HEK293 (cell line): ENCODE measurements at regions of chr15 and their contacts with region 1.

Region 1: DNA sequence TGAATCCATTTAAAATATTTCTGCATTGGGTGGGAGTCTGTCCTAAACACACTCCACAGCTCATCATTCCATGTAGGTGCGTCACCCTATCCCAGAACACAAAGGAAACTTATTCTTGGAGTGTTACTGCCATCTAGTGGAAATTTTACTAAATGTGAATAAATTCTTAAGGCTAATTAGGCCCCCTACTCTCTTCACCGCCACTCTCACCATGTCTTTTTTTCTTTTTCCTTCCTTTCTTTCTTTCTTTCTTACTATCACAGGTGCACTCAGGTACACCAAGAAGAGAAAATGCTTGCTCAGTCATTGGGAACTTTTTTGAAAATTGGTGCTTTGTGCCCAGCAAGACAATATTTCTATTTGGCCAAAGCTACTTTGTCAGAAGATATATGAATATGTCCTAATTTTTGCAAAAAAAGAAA is 26.4 kb upstream of the ATP8B4 start:
- H3K4me3 ChIP-seq: no peak overlapping the region
- H3K27ac ChIP-seq: no peak overlapping the region
- H3K4me1 ChIP-seq: no peaks in the 10 kb centered on the region
- CTCF ChIP-seq: 0 out of 2 replicates have a peak, but pooled peaks have one; percentile 39

Region 2: GRCh38 chr15:49235446-49236124 is 909.9 kb before region 1 on chr15:
- CTCF ChIA-PET with region 1: interaction called, 12 read pairs
- POLR2A ChIA-PET with region 1: no interaction called
- H3K4me3 ChIP-seq: no peak overlapping the region
- H3K27ac ChIP-seq: no peak overlapping the region
- H3K4me1 ChIP-seq: peaks cover 3% of the 10 kb centered on the region; the same call in 1 of the 2 replicates
- CTCF ChIP-seq: peak; percentile 38; the same call in 1 of the 2 replicates

Region 3: GRCh38 chr15:50017522-50017921 is 127.9 kb before region 1 on chr15:
- CTCF ChIA-PET with region 1: no interaction called
- POLR2A ChIA-PET with region 1: no interaction called
- H3K4me3 ChIP-seq: no peak overlapping the region
- H3K27ac ChIP-seq: no peak overlapping the region
- H3K4me1 ChIP-seq: no peaks in the 10 kb centered on the region
- CTCF ChIP-seq: no peak

Region 4: GRCh38 chr15:50241684-50242450 is 96.4 kb after region 1 on chr15:
- CTCF ChIA-PET with region 1: no interaction called
- POLR2A ChIA-PET with region 1: no interaction called
- H3K4me3 ChIP-seq: no peak overlapping the region
- H3K27ac ChIP-seq: no peak overlapping the region
- H3K4me1 ChIP-seq: no peaks in the 10 kb centered on the region
- CTCF ChIP-seq: no peak

Region 5: DNA sequence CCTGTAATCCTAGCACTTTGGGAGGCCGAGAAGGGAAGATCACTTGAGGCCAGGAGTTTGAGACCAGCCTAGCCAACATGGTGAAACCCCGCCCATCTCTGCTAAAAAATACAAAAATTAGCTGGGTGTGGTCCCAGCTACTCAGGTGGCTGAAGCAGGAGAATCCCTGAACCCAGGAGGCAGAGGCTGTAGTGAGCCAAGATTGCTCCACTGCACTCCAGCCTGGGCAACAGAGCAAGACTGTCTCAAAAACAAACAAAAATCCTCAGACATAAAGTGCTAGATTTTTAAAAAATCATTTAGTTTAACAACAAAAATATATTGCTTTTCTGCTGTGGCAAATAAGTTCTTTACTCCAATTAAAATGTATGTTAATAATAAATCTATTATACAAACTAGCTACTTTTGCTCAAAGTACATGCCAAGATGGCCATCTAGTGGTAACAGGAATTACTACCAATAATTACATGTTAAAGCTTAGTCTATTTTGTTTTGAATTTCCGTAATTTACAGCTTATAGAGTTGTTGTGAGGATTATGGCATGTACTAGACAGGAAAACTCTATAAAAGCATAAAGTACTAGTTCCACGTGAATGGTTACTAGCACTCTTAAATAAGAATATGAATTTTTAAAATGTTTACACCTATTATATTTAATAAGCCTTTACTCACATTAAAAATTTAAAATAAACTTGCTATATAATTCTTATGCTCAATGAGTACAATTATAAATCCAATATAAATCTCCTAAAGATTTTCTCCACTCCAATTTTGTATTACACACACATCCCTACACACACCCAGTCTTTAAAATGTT is 170.6 kb after region 1 on chr15:
- CTCF ChIA-PET with region 1: interaction called, 23 read pairs
- POLR2A ChIA-PET with region 1: no interaction called
- H3K4me3 ChIP-seq: no peak overlapping the region
- H3K27ac ChIP-seq: no peak overlapping the region
- H3K4me1 ChIP-seq: no peaks in the 10 kb centered on the region
- CTCF ChIP-seq: no peak